CD4-positive, alpha-beta memory T cell (primary cell): ENCODE measurements at regions of chr2 and their contacts with region 1.

Region 1: DNA sequence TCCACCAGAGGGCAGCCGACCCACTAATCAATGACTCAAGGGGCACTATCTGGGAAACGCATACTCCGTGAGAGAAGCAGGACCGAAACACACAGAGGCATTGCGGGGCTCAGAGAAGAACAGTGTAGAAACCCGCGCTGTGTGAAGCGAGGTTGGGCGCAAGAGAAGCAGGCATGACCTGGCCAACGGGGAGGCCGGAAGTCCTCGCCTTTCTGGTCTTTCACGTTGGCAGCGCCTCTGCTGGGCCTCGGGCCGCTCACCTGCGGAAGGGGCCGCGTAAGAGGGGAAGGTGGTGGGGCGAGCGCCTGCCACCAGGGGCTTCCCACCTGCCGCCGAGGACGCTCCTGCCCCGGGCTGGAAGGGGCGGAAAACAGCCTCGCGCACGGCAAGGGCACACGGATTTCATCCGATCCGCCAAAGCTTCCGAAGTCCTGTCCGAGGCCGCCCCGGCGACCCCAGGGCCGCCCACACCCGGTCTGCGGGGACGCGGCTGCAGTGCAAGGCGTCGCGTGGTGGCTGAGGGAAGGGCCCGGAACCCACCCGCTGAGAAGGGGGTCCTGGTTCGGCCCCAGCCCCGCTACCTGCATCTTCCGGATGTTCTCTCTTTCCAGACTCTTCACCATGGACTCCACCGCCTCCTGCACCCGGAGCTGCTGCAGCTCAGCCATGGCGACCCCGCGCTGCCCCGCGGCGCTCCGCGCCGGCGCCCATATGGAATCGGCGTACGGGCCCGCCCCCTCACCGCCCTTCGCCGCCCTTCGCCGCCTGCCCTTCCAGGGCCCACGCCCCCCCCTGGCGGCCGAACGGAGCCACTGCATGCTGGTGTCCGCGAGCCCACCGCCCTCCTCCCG is at the start of gene FAM136A:
- DNase-seq: peak; percentile 86 to 89 (median 86)
- H3K4me3 ChIP-seq: peak within 1 kb of the TSS; percentile 72 to 80
- H3K4me3 Mint-ChIP-seq: peak within 1 kb of the TSS; percentile 84 to 97 (median 93)
- H3K27ac ChIP-seq: peak within 1 kb of the TSS; percentile 79
- H3K27ac Mint-ChIP-seq: peak within 1 kb of the TSS; percentile 77 to 94 (median 91)
- H3K4me1 ChIP-seq: peaks cover 8% of the 10 kb centered on the region
- H3K4me1 Mint-ChIP-seq: peaks cover 15 to 26% (median 22%) of the 10 kb centered on the region in 4 donors
- H3K27me3 ChIP-seq: no peaks in the 10 kb centered on the region
- H3K27me3 Mint-ChIP-seq: no peaks in the 10 kb centered on the region
- total RNA-seq, gene FAM136A: 26.2 to 27.4 TPM

Region 2: GRCh38 chr2:69306822-69307578 is 994.6 kb before region 1 on chr2:
- CTCF ChIA-PET with region 1: no interaction called
- POLR2A ChIA-PET with region 1: no interaction called
- intact Hi-C with region 1: no loop called
- DNase-seq: peak; percentile 39 to 59 (median 49)
- H3K4me3 ChIP-seq: peak overlapping the region; percentile 29 to 63
- H3K4me3 Mint-ChIP-seq: peak overlapping the region; percentile 51 to 82 (median 78)
- H3K27ac ChIP-seq: no peak overlapping the region
- H3K27ac Mint-ChIP-seq: peak overlapping the region in 2 of 7 donors; percentile 13 to 52
- H3K4me1 ChIP-seq: peaks cover 34% of the 10 kb centered on the region
- H3K4me1 Mint-ChIP-seq: peaks cover 13 to 45% (median 27%) of the 10 kb centered on the region in 4 donors
- H3K27me3 ChIP-seq: peaks cover 18% of the 10 kb centered on the region
- H3K27me3 Mint-ChIP-seq: peaks cover 16 to 19% of the 10 kb centered on the region in 2 donors

Region 3: GRCh38 chr2:69724540-69725159 is 576.9 kb before region 1 on chr2:
- CTCF ChIA-PET with region 1: interaction called, 14 read pairs
- POLR2A ChIA-PET with region 1: no interaction called
- intact Hi-C with region 1: loop called (anchors 1 kb)
- DNase-seq: peak; percentile 74 to 80 (median 77)
- H3K4me3 ChIP-seq: no peak overlapping the region
- H3K4me3 Mint-ChIP-seq: peak overlapping the region in 7 of 8 donors; percentile 38 to 70 (median 60)
- H3K27ac ChIP-seq: no peak overlapping the region
- H3K27ac Mint-ChIP-seq: no peak overlapping the region
- H3K4me1 ChIP-seq: peaks cover 7% of the 10 kb centered on the region
- H3K4me1 Mint-ChIP-seq: peaks cover 4 to 7% (median 6%) of the 10 kb centered on the region in 4 donors
- H3K27me3 ChIP-seq: no peaks in the 10 kb centered on the region
- H3K27me3 Mint-ChIP-seq: no peaks in the 10 kb centered on the region

Region 4: DNA sequence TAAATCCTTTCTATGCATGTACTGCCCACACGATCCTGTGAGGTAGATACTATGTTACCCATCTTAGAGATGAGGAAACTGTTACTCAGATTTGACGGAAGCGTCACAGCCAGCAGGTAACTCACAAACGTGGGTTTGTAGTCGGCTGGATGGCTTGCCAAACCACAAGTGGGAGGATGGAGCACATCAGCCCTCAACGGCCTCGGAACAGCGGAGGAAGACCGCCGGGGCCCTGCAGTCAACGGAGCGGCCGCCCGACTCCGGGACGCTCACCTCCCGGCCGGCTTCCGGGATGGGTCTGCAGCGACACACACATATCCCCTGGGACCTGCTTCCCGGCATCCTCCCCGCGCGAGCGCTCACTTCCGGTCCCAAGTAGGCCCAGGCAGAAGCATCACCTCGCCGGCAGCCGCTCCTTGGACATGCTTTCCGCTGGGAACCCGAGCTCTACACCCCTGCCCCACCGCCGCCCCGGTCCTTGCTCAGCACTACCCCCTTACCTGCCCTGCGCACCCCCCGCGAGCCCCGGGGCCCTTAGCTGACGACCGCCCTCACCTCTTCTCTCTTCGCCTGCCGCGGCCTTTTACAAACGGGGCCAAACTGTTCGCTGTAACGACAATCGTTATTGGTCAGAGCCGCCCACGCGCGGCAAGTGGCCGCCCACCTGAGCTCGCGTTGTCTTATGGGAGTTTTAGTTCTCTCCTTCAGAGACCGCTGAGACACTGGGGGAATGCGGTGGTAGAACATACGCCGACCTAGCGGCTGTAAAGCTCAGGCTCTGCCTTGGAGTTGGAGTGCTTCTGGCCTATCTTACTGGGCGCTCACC is 110.9 kb before region 1 on chr2 and contains the start of gene C2orf42:
- CTCF ChIA-PET with region 1: interaction called, 17 read pairs
- POLR2A ChIA-PET with region 1: interaction called, 9 read pairs
- intact Hi-C with region 1: loop called (anchors 2 kb)
- DNase-seq: peak; percentile 96 to 97 (median 97)
- H3K4me3 ChIP-seq: peak within 1 kb of the TSS; percentile 93 to 96
- H3K4me3 Mint-ChIP-seq: peak within 1 kb of the TSS; percentile 90 to 98 (median 96)
- H3K27ac ChIP-seq: peak within 1 kb of the TSS; percentile 81
- H3K27ac Mint-ChIP-seq: peak within 1 kb of the TSS; percentile 98 to 100 (median 99)
- H3K4me1 ChIP-seq: peaks cover 15% of the 10 kb centered on the region
- H3K4me1 Mint-ChIP-seq: peaks cover 15 to 25% (median 20%) of the 10 kb centered on the region in 4 donors
- H3K27me3 ChIP-seq: no peaks in the 10 kb centered on the region
- H3K27me3 Mint-ChIP-seq: peaks cover 0 to 1% of the 10 kb centered on the region in 2 donors
- total RNA-seq, gene C2orf42: 36.7 to 47.9 TPM

Region 5: GRCh38 chr2:70340921-70341765 is 39.6 kb after region 1 on chr2:
- CTCF ChIA-PET with region 1: interaction called, 21 read pairs
- POLR2A ChIA-PET with region 1: no interaction called
- intact Hi-C with region 1: loop called (anchors 1 kb)
- DNase-seq: peak; percentile 41 to 50 (median 47)
- H3K4me3 ChIP-seq: no peak overlapping the region
- H3K4me3 Mint-ChIP-seq: peak overlapping the region in 1 of 8 donors; percentile 0
- H3K27ac ChIP-seq: no peak overlapping the region
- H3K27ac Mint-ChIP-seq: no peak overlapping the region
- H3K4me1 ChIP-seq: no peaks in the 10 kb centered on the region
- H3K4me1 Mint-ChIP-seq: peaks cover 0 to 2% (median under 1%) of the 10 kb centered on the region in 4 donors
- H3K27me3 ChIP-seq: no peaks in the 10 kb centered on the region
- H3K27me3 Mint-ChIP-seq: peaks cover 5 to 12% of the 10 kb centered on the region in 2 donors

Region 6: DNA sequence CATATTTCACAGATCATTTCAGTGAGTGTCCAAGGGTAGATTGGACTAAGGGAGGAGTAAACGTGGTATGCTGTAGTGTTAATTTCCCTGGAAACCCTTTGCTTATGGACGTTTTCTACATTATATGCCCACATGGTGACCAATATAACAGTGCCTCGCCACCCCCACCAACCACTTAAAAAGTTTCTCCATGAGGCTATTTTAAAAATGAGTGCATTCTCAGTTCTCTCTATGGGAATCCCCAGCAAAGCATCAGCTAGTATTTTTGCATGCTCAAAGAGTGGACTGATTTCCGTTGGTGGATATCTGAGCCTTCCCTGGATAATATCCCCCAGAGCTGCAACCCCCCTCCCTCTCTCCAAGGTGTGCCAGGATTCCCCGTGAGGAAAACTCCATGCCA is 178.9 kb after region 1 on chr2:
- CTCF ChIA-PET with region 1: no interaction called
- POLR2A ChIA-PET with region 1: no interaction called
- intact Hi-C with region 1: no loop called
- DNase-seq: no peak
- H3K4me3 ChIP-seq: no peak overlapping the region
- H3K4me3 Mint-ChIP-seq: no peak overlapping the region
- H3K27ac ChIP-seq: no peak overlapping the region
- H3K27ac Mint-ChIP-seq: no peak overlapping the region
- H3K4me1 ChIP-seq: peaks cover 4% of the 10 kb centered on the region
- H3K4me1 Mint-ChIP-seq: peaks cover 0 to 3% (median 3%) of the 10 kb centered on the region in 4 donors
- H3K27me3 ChIP-seq: no peaks in the 10 kb centered on the region
- H3K27me3 Mint-ChIP-seq: peaks cover 0 to 1% of the 10 kb centered on the region in 2 donors

Region 7: DNA sequence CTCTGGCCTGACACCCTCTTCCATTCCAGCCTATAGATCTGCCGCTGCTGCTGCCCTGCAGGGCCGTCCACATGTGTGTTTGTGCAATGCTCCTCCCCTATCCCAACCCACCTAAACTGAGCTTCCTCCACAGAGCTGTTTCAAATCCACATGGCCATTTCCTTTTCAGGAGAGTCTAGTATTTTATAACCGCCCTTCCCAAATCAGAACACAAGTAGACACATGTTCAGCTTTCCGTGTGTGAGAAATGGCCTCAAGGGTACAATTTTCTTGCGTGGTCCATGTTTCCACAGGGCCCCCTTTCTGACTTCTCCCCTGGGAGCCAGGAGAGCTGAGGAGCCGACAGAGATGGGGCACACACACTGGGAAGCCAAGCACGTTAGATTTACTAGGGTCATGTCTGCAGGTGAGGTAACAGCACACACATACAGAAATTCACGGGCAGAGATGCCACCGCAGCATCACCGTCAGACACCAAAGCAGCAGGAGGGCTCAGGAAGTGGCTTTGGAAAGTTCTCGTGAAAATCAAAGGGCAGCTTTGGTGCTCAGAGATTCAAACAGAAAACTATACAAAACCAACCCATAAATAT is 354.9 kb after region 1 on chr2:
- CTCF ChIA-PET with region 1: interaction called, 18 read pairs
- POLR2A ChIA-PET with region 1: no interaction called
- intact Hi-C with region 1: no loop called
- DNase-seq: peak; percentile 31 to 59 (median 43)
- H3K4me3 ChIP-seq: no peak overlapping the region
- H3K4me3 Mint-ChIP-seq: peak overlapping the region in 2 of 8 donors; percentile 9 to 42
- H3K27ac ChIP-seq: no peak overlapping the region
- H3K27ac Mint-ChIP-seq: peak overlapping the region in 4 of 7 donors; percentile 23 to 75 (median 32)
- H3K4me1 ChIP-seq: peaks cover 13% of the 10 kb centered on the region
- H3K4me1 Mint-ChIP-seq: peaks cover 11 to 21% (median 15%) of the 10 kb centered on the region in 4 donors
- H3K27me3 ChIP-seq: no peaks in the 10 kb centered on the region
- H3K27me3 Mint-ChIP-seq: peaks cover 16 to 28% of the 10 kb centered on the region in 2 donors

Region 8: DNA sequence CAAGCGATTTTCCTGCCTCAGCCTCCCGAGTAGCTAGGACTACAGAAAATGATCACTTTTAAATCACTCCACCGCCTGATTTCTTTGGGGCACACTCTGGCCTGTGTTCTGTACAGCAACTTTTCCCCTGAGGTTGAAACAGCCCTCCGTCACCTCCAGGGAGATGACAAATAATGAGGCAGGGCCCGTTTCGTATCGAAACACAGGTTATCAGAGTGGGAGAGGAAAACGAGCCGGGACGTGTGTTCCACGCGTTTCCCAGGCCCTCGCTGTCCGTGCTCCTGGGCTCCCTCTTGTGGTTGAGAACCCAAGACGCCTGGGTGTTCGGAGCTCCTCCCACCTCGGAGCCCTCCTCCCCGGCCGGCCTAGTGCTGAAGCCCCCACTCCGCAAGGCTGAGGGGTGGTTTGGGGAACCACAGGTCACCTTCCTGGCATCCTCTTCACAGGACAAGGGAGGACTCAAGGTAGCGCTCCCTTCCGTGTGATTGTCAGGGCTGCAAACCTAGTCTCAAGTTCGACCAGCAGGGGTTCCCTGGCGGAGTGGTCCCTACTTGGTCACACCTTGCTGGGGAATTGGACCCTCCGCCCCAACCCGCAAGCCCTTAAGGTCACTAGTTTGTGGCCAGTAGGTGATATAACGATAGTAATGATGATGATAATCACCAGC is 646.9 kb after region 1 on chr2:
- CTCF ChIA-PET with region 1: interaction called, 40 read pairs
- POLR2A ChIA-PET with region 1: no interaction called
- intact Hi-C with region 1: loop called (anchors 1 kb)
- DNase-seq: peak; percentile 62 to 74 (median 72)
- H3K4me3 ChIP-seq: peak overlapping the region; percentile 6 to 36
- H3K4me3 Mint-ChIP-seq: peak overlapping the region; percentile 78 to 92 (median 84)
- H3K27ac ChIP-seq: no peak overlapping the region
- H3K27ac Mint-ChIP-seq: peak overlapping the region in 3 of 7 donors; percentile 5 to 87 (median 78)
- H3K4me1 ChIP-seq: peaks cover 8% of the 10 kb centered on the region
- H3K4me1 Mint-ChIP-seq: peaks cover 8 to 17% (median 13%) of the 10 kb centered on the region in 4 donors
- H3K27me3 ChIP-seq: peaks cover 5% of the 10 kb centered on the region
- H3K27me3 Mint-ChIP-seq: peaks cover 7 to 9% of the 10 kb centered on the region in 2 donors